ENCODE measurements at regions of chr17 and their contacts with region 1.

Region 1: GRCh38 chr17:67376737-67377487 is at the start of gene PITPNC1:
- DNase-seq: peak; percentile 63 to 80 (median 73)
- ATAC-seq: peak; percentile 83
- H3K4me3 ChIP-seq: peak within 1 kb of the TSS; percentile 60
- H3K27ac ChIP-seq: no peak within 1 kb of the TSS
- H3K4me1 ChIP-seq: peaks cover 18 to 44% of the 10 kb centered on the region in 2 experiments; a peak in 4 of 5 replicates
- H3K27me3 ChIP-seq: peaks cover 9 to 10% of the 10 kb centered on the region in 2 experiments; a peak in 3 of 5 replicates
- CTCF ChIP-seq: no peak
- EP300 ChIP-seq: no peak
- POLR2A ChIP-seq: no peak
- RAD21 ChIP-seq: no peak
- polyA plus RNA-seq, gene PITPNC1: 0.11 to 0.45 TPM

Region 2: DNA sequence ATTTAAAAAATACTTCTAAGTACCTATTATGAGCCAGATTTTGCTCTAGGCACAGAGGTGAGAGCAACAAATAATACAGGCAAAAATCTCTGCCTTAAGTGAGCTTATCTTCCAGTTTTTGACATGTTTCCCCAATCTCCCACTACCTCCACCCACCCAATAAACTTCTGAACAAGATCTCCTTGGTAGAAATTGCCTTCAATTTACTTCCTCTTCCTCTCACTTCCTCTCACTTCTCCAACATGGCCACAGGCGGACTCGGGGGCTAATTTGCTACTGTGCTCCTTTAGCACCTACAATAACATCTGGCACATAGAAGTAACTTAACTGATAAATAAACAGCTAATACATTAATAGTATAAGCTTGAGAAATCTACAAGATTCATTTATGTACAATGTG is 249.9 kb before region 1 on chr17:
- CTCF ChIA-PET with region 1: no interaction called
- POLR2A ChIA-PET with region 1: no interaction called
- in situ Hi-C with region 1: no loop called
- intact Hi-C with region 1: no loop called
- DNase-seq: no peak
- ATAC-seq: no peak
- H3K4me3 ChIP-seq: no peak overlapping the region
- H3K27ac ChIP-seq: no peak overlapping the region
- H3K4me1 ChIP-seq: no peaks in the 10 kb centered on the region
- H3K27me3 ChIP-seq: no peaks in the 10 kb centered on the region
- CTCF ChIP-seq: no peak
- EP300 ChIP-seq: no peak
- POLR2A ChIP-seq: no peak
- RAD21 ChIP-seq: no peak

Region 3: GRCh38 chr17:67475236-67475937 is 98.5 kb after region 1 on chr17:
- CTCF ChIA-PET with region 1: interaction called, 5 read pairs
- POLR2A ChIA-PET with region 1: no interaction called
- in situ Hi-C with region 1: no loop called
- intact Hi-C with region 1: loop called (anchors 5 kb)
- DNase-seq: peak in 3 of 4 experiments; percentile 15 to 36 (median 18)
- ATAC-seq: peak; percentile 67
- H3K4me3 ChIP-seq: no peak overlapping the region
- H3K27ac ChIP-seq: no peak overlapping the region
- H3K4me1 ChIP-seq: no peaks in the 10 kb centered on the region
- H3K27me3 ChIP-seq: peaks cover 15 to 37% of the 10 kb centered on the region in 2 experiments; a peak in 3 of 5 replicates
- CTCF ChIP-seq: peak; percentile 68 to 75 (median 73)
- EP300 ChIP-seq: no peak
- POLR2A ChIP-seq: no peak
- RAD21 ChIP-seq: peak; percentile 59 to 65

Region 4: DNA sequence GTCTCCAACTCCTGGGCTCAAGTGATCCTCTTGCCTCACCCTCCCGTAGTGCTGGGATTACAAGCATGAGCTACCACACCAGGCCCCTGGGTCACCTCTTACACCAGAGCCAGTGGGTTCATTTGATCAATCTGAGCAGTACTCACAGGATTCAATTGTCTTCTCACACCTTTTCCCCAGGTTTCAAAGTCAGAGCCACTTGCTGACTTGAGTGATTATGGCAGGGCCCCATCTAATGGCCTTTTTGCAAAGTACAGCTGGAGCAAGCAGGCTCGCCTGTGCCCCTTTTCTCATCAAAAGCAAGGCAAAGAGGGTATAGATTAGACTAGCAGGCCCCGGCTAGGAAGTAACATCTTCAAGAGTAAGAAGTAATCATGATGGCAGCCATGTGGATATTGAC is 226.0 kb after region 1 on chr17:
- CTCF ChIA-PET with region 1: interaction called, 3 read pairs
- POLR2A ChIA-PET with region 1: no interaction called
- in situ Hi-C with region 1: no loop called
- intact Hi-C with region 1: loop called (anchors 5 kb)
- DNase-seq: peak in 2 of 4 experiments; percentile 27 to 38
- ATAC-seq: peak; percentile 75
- H3K4me3 ChIP-seq: no peak overlapping the region
- H3K27ac ChIP-seq: no peak overlapping the region
- H3K4me1 ChIP-seq: no peaks in the 10 kb centered on the region
- H3K27me3 ChIP-seq: peaks cover 30 to 40% of the 10 kb centered on the region in 2 experiments; a peak in 4 of 5 replicates
- CTCF ChIP-seq: peak; percentile 42 to 60 (median 49)
- EP300 ChIP-seq: no peak
- POLR2A ChIP-seq: no peak
- RAD21 ChIP-seq: peak; percentile 35 to 66; a peak in 3 of 4 replicates

Region 5: GRCh38 chr17:67689534-67690177 is 312.7 kb after region 1 on chr17:
- CTCF ChIA-PET with region 1: interaction called, 6 read pairs
- POLR2A ChIA-PET with region 1: no interaction called
- in situ Hi-C with region 1: loop called (anchors 25 kb)
- intact Hi-C with region 1: loop called (anchors 5 kb)
- DNase-seq: peak; percentile 61 to 71 (median 68)
- ATAC-seq: peak; percentile 65; the same call in 2 of the 3 replicates
- H3K4me3 ChIP-seq: no peak overlapping the region
- H3K27ac ChIP-seq: no peak overlapping the region
- H3K4me1 ChIP-seq: no peaks in the 10 kb centered on the region; a peak in 1 of 5 replicates
- H3K27me3 ChIP-seq: peaks cover 27 to 32% of the 10 kb centered on the region in 2 experiments; a peak in 4 of 5 replicates
- CTCF ChIP-seq: peak; percentile 62 to 80 (median 71)
- EP300 ChIP-seq: no peak
- POLR2A ChIP-seq: no peak
- RAD21 ChIP-seq: peak; percentile 44 to 74